Calu3 (cell line): ENCODE measurements at regions of chr12 and their contacts with region 1.

Region 1: DNA sequence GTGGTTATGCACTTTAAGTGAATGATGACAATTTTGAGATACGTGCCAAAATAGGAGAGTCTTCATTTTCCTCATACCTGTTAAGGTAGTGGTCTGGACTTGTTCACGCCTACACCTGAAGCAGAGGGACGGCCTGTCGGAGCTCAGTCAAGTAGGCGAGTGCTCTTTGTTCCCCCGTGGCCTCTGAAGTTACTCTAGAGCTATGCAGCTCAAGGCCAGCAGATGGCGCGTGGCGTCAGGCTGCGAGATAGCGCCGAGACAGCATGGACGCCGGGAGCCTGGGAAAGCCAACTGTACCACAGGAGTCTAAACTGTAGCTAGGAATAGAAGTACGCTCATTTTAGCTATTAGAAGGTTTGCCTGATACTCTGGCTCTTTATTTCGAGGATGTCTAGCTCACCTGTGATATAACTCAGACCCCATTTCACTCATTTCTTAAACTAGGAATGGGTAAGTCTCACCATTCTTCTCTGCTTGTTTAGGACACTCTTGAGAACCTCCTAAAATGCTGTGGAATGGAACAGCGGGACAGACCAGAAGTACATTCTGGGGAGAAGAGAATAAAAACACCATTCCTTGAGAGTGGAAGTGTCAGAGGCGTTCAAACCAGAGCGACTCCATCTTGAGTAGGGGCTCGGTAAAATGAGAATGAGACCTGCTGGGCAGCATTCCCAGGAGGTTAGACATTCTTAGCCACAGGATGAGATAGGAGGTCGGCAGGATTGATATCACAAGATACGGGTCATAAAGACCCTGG is 267.4 kb upstream of the HMGA2 start:
- DNase-seq: peak; percentile 90
- H3K4me3 Mint-ChIP-seq: no peak overlapping the region
- H3K27ac Mint-ChIP-seq: peak overlapping the region; percentile 71
- H3K4me1 Mint-ChIP-seq: peaks cover 20% of the 10 kb centered on the region
- H3K27me3 Mint-ChIP-seq: no peaks in the 10 kb centered on the region
- CTCF ChIP-seq: peak; percentile 93

Region 2: DNA sequence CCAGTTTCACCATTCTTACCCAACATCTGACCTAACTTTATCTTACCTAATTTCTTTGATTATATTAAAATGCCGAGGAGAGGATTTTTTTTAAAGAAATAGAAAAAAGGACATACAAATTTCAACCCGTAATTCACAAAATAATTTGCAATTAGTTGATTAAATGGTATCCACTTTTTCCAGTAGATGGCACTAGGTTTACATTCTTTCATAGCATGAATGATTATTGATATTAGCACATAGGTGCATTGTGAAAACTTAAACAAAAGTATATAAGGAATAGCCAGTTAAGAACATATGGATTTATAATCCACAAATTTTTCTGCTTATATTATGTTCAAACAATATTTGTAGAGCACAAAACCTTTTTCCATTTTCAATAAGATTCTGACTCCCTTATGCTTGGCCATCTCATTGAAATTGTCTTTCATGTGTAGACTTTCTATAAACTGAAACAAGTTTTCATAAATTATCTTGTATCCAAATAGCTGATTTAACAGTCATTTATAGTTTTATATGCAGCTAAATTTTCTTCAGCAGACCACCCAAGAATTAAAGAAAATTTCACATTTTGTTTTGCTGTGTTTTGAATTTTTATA is 243.0 kb before region 1 on chr12:
- CTCF ChIA-PET with region 1: interaction called, 3 read pairs
- intact Hi-C with region 1: loop called (anchors 2 kb)
- DNase-seq: no peak
- H3K4me3 Mint-ChIP-seq: no peak overlapping the region
- H3K27ac Mint-ChIP-seq: no peak overlapping the region
- H3K4me1 Mint-ChIP-seq: peaks cover 6% of the 10 kb centered on the region
- H3K27me3 Mint-ChIP-seq: no peaks in the 10 kb centered on the region
- CTCF ChIP-seq: peak; percentile 43

Region 3: DNA sequence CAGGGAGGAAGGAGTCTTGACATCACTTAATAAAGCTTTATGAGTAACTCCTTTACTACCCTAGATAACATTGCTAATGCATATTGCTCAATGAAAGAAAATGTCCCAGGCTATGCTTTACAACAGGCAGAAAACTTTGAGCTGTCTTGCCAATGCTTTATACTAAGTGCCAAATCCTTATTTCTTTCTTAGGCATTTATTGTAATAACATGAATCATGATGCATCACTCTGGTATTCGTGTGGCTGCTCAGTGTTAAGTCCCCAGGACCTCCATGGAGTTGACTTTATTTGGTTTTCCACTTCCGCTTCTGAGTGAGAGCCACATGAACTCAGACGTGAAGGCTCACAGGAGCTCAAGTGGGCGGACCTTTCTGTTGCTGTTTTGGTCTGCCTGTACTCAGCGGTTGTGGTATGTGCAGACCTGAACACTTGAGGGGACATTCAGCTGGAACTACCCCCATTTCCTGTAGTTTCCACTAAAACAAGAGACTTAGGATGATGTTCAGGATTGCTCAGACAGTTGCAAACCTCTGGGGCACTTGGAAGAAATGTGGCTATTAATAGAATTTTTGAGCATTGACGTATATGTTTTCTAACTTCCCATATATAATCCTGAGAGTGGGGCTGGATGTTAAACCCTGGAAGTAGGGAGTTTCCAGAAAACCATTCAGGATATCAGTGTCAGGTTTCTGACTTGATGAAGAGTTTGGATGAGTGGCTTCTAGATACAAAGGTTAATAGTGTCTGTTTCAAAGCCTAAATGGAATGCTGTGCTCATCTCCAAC is 19.8 kb before region 1 on chr12:
- CTCF ChIA-PET with region 1: interaction called, 11 read pairs
- intact Hi-C with region 1: no loop called
- DNase-seq: peak; percentile 82
- H3K4me3 Mint-ChIP-seq: peak overlapping the region; percentile 8
- H3K27ac Mint-ChIP-seq: peak overlapping the region; percentile 42
- H3K4me1 Mint-ChIP-seq: peaks cover 59% of the 10 kb centered on the region
- H3K27me3 Mint-ChIP-seq: no peaks in the 10 kb centered on the region
- CTCF ChIP-seq: no peak

Region 4: GRCh38 chr12:65602610-65603295 is 45.9 kb after region 1 on chr12:
- CTCF ChIA-PET with region 1: interaction called, 18 read pairs
- intact Hi-C with region 1: loop called (anchors 1 kb)
- DNase-seq: peak; percentile 93
- H3K4me3 Mint-ChIP-seq: peak overlapping the region; percentile 68
- H3K27ac Mint-ChIP-seq: peak overlapping the region; percentile 95
- H3K4me1 Mint-ChIP-seq: peaks cover 78% of the 10 kb centered on the region
- H3K27me3 Mint-ChIP-seq: no peaks in the 10 kb centered on the region
- CTCF ChIP-seq: peak; percentile 77

Region 5: DNA sequence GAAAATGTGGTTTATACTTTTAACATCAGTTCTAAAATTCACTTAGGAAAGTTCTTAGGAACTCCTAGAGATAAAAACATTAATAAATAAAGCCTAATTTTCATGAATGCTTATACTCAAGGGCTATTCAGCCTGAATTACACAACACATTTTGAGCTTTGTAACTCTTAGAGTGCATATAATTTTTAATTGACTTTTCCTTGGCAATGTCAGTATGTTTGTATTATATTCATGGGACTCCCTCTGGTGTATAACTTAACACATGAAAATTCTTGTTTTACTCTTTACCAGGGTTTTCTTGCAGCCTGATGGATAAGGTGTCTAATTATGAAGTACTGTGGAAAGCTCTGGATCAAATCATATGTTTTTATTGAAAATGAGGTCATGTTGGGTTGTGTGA is 116.9 kb after region 1 on chr12:
- CTCF ChIA-PET with region 1: interaction called, 20 read pairs
- intact Hi-C with region 1: loop called (anchors 2 kb)
- DNase-seq: no peak
- H3K4me3 Mint-ChIP-seq: no peak overlapping the region
- H3K27ac Mint-ChIP-seq: peak overlapping the region; percentile 85
- H3K4me1 Mint-ChIP-seq: peaks cover 38% of the 10 kb centered on the region
- H3K27me3 Mint-ChIP-seq: no peaks in the 10 kb centered on the region
- CTCF ChIP-seq: no peak

Region 6: GRCh38 chr12:65878544-65878943 is 321.7 kb after region 1 on chr12:
- CTCF ChIA-PET with region 1: no interaction called
- intact Hi-C with region 1: loop called (anchors 2 kb)
- DNase-seq: peak; percentile 46
- H3K4me3 Mint-ChIP-seq: no peak overlapping the region
- H3K27ac Mint-ChIP-seq: no peak overlapping the region
- H3K4me1 Mint-ChIP-seq: peaks cover 41% of the 10 kb centered on the region
- H3K27me3 Mint-ChIP-seq: no peaks in the 10 kb centered on the region
- CTCF ChIP-seq: no peak

Region 7: DNA sequence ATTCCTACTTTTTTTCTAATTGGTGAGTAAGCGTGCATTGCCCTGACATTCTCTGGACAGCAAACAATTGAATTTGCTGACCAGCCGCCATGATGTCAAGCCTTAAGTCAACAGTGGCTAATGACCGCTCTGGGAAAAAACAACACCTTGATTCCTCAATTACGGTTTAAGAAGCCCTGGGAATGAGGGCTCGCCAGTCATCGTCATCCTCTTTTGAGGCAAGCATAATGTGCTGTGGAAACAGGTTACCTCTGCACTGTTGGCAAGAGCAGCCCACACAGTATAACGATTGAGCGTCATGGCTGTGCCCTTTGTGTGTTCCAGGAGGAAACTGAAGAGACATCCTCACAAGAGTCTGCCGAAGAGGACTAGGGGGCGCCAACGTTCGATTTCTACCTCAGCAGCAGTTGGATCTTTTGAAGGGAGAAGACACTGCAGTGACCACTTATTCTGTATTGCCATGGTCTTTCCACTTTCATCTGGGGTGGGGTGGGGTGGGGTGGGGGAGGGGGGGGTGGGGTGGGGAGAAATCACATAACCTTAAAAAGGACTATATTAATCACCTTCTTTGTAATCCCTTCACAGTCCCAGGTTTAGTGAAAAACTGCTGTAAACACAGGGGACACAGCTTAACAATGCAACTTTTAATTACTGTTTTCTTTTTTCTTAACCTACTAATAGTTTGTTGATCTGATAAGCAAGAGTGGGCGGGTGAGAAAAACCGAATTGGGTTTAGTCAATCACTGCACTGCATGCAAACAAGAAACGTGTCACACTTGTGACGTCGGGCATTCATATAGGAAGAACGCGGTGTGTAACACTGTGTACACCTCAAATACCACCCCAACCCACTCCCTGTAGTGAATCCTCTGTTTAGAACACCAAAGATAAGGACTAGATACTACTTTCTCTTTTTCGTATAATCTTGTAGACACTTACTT is 406.3 kb after region 1 on chr12:
- CTCF ChIA-PET with region 1: no interaction called
- intact Hi-C with region 1: no loop called
- DNase-seq: peak; percentile 47
- H3K4me3 Mint-ChIP-seq: no peak overlapping the region
- H3K27ac Mint-ChIP-seq: no peak overlapping the region
- H3K4me1 Mint-ChIP-seq: peaks cover 27% of the 10 kb centered on the region
- H3K27me3 Mint-ChIP-seq: no peaks in the 10 kb centered on the region
- CTCF ChIP-seq: peak; percentile 29

Region 8: GRCh38 chr12:65986047-65986446 is 429.2 kb after region 1 on chr12:
- CTCF ChIA-PET with region 1: no interaction called
- intact Hi-C with region 1: loop called (anchors 5 kb)
- DNase-seq: no peak
- H3K4me3 Mint-ChIP-seq: no peak overlapping the region
- H3K27ac Mint-ChIP-seq: no peak overlapping the region
- H3K4me1 Mint-ChIP-seq: no peaks in the 10 kb centered on the region
- H3K27me3 Mint-ChIP-seq: no peaks in the 10 kb centered on the region
- CTCF ChIP-seq: no peak